ENCODE measurements at regions of chr11 and their contacts with region 1.

Region 1: DNA sequence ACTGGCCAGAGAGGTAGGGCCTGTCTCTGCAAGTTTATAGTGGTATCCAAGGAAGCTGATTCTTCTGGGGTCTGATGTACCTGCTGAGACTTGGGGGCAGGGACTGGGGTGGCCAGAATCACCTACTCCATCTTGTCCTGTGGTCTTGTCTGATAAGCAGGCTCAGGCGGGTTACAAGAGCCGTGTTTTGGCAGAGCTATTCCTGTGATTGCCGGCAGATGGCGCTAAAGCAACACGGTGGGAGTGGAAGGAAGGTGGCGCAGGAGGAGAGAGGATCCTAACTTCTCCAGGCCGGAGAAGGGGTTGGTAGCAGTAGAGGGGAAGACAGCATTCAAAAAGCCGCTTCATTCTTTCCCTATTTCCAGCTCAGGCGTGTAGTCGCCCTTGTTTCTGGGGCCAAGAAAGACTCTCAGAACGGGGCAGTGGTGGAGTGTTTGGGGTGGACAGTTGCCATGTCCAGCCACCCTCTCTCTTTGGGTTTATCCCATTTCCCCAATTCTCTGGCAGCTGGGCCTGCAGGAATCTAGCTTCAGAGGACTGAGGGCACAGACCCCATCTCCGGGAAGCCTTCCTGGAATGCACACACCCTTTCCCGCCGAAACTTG is 15.1 kb downstream of the CHRM1 start:
- DNase-seq: peak; percentile 85
- H3K4me3 ChIP-seq: peak overlapping the region in 1 of 2 experiments; percentile 42; a peak in 2 of 4 replicates
- H3K27ac ChIP-seq: no peak overlapping the region
- H3K4me1 ChIP-seq: peaks cover 0 to 24% of the 10 kb centered on the region in 2 experiments; a peak in 1 of 4 replicates
- H3K27me3 ChIP-seq: no peaks in the 10 kb centered on the region
- CTCF ChIP-seq: peak; percentile 98
- EP300 ChIP-seq: no peak
- RAD21 ChIP-seq: peak; percentile 99

Region 2: GRCh38 chr11:62787005-62787759 is 118.8 kb before region 1 on chr11 and contains the start of gene TMEM179B:
- CTCF ChIA-PET with region 1: no interaction called
- POLR2A ChIA-PET with region 1: no interaction called
- DNase-seq: peak; percentile 97
- H3K4me3 ChIP-seq: peak within 1 kb of the TSS; percentile 76 to 87
- H3K27ac ChIP-seq: peak within 1 kb of the TSS; percentile 65 to 89
- H3K4me1 ChIP-seq: peaks cover 6 to 26% of the 10 kb centered on the region in 2 experiments
- H3K27me3 ChIP-seq: no peaks in the 10 kb centered on the region
- CTCF ChIP-seq: peak; percentile 49
- EP300 ChIP-seq: peak in 1 of 2 experiments; percentile 15; a peak in 1 of 4 replicates
- RAD21 ChIP-seq: peak; percentile 27; the same call in 1 of the 2 replicates
- polyA plus RNA-seq, gene TMEM179B: 69.6 and 73.3 TPM in 2 replicates

Region 3: GRCh38 chr11:62880803-62881578 is 25.0 kb before region 1 on chr11 and contains the start of gene SLC3A2:
- CTCF ChIA-PET with region 1: interaction called, 76 read pairs
- POLR2A ChIA-PET with region 1: no interaction called
- DNase-seq: peak; percentile 89
- H3K4me3 ChIP-seq: peak within 1 kb of the TSS; percentile 82 to 91
- H3K27ac ChIP-seq: peak within 1 kb of the TSS; percentile 94 to 98
- H3K4me1 ChIP-seq: peaks cover 32 to 44% of the 10 kb centered on the region in 2 experiments
- H3K27me3 ChIP-seq: no peaks in the 10 kb centered on the region
- CTCF ChIP-seq: peak; percentile 67
- EP300 ChIP-seq: no peak
- RAD21 ChIP-seq: peak; percentile 57
- polyA plus RNA-seq, gene SLC3A2: 212 and 308 TPM in 2 replicates

Region 4: GRCh38 chr11:62922658-62923431 is 16.8 kb after region 1 on chr11:
- CTCF ChIA-PET with region 1: interaction called, 54 read pairs
- POLR2A ChIA-PET with region 1: no interaction called
- DNase-seq: no peak
- H3K4me3 ChIP-seq: no peak overlapping the region
- H3K27ac ChIP-seq: no peak overlapping the region
- H3K4me1 ChIP-seq: peaks cover 0 to 36% of the 10 kb centered on the region in 2 experiments; a peak in 1 of 4 replicates
- H3K27me3 ChIP-seq: no peaks in the 10 kb centered on the region
- CTCF ChIP-seq: peak; percentile 23; the same call in 1 of the 2 replicates
- EP300 ChIP-seq: no peak
- RAD21 ChIP-seq: no peak

Region 5: DNA sequence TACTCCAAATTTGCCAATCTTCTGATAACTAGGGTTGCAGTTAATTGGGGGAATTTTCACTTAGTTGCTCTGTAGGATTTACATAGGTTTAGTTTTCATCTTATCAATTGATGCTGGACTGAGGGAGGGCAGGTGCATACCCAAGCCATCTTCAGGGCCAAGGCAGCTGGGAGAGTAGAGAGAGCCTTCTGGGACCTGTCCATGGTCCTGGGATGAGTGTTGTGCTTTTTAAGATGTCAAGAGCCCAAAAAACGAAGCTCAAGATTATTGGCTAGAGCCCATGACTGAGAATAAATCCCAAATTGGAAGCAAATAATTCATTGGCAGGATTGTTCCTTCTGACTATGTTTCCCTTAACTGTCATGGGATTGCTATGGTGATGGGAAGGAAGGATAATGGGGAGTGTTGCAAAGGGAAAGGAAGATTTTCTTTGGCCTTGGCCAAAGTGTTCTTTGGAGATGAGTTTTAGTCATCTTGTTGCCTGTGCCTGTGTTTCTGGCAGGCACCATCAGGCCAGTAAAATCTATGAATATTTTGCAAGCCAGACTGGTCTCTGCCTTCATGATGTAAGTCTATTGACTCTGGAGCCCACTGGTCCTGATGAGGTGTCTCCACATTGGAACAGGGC is 74.2 kb after region 1 on chr11:
- CTCF ChIA-PET with region 1: interaction called, 62 read pairs
- POLR2A ChIA-PET with region 1: interaction called, 4 read pairs
- DNase-seq: no peak
- H3K4me3 ChIP-seq: no peak overlapping the region
- H3K27ac ChIP-seq: no peak overlapping the region
- H3K4me1 ChIP-seq: peaks cover 0 to 1% of the 10 kb centered on the region in 2 experiments; a peak in 1 of 4 replicates
- H3K27me3 ChIP-seq: no peaks in the 10 kb centered on the region
- CTCF ChIP-seq: no peak
- EP300 ChIP-seq: no peak
- RAD21 ChIP-seq: no peak

Region 6: DNA sequence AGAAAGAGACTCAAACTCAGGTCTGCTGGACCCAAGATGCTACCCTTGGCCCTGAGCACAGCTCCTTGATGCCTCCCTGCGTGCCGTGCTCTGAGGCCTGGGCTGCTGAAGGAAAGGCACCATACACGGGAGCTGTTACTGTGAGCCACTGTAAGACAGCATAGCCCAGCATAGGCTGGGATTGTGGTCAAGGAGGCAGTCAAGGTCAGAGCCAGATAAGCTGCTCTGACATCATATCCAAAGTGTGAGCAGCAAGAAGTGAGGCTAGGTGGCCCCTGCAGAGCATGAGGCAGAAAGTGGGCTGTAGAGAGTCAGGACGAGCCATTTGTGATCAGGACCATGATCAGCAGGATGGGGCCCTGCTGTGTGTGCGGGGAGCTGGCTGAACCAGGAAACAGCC is 101.9 kb after region 1 on chr11:
- CTCF ChIA-PET with region 1: interaction called, 28 read pairs
- POLR2A ChIA-PET with region 1: no interaction called
- DNase-seq: no peak
- H3K4me3 ChIP-seq: no peak overlapping the region
- H3K27ac ChIP-seq: no peak overlapping the region
- H3K4me1 ChIP-seq: no peaks in the 10 kb centered on the region; a peak in 1 of 4 replicates
- H3K27me3 ChIP-seq: no peaks in the 10 kb centered on the region
- CTCF ChIP-seq: no peak
- EP300 ChIP-seq: no peak
- RAD21 ChIP-seq: no peak

Region 7: GRCh38 chr11:63023841-63024648 is 118.0 kb after region 1 on chr11:
- CTCF ChIA-PET with region 1: interaction called, 751 read pairs
- POLR2A ChIA-PET with region 1: interaction called, 5 read pairs
- DNase-seq: peak; percentile 82
- H3K4me3 ChIP-seq: peak overlapping the region in 1 of 2 experiments; percentile 49; a peak in 1 of 4 replicates
- H3K27ac ChIP-seq: no peak overlapping the region
- H3K4me1 ChIP-seq: peaks cover 0 to 9% of the 10 kb centered on the region in 2 experiments; a peak in 1 of 4 replicates
- H3K27me3 ChIP-seq: no peaks in the 10 kb centered on the region
- CTCF ChIP-seq: peak; percentile 99
- EP300 ChIP-seq: no peak
- RAD21 ChIP-seq: peak; percentile 98

Region 8: DNA sequence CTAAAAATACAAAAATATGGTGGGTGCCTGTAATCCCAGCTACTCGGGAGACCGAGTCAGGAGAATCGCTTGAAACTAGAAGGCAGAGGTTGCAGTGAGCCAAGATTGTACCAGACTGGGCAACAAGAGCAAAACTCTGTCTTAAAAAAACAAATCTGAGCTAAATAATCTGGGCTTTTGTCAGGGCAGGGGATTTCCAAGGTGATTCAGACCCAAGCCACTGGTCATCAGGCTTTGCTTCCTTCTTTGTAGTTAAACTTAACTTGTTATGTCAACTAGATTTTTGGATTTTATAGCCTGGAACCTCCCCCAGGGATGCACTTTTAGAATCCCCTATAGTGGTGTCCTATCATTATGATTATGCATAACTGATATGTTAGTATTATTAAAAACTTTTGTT is 136.6 kb after region 1 on chr11:
- CTCF ChIA-PET with region 1: interaction called, 251 read pairs
- POLR2A ChIA-PET with region 1: no interaction called
- DNase-seq: no peak
- H3K4me3 ChIP-seq: no peak overlapping the region
- H3K27ac ChIP-seq: no peak overlapping the region
- H3K4me1 ChIP-seq: no peaks in the 10 kb centered on the region
- H3K27me3 ChIP-seq: no peaks in the 10 kb centered on the region; the same call in 1 of the 2 replicates
- CTCF ChIP-seq: no peak
- EP300 ChIP-seq: no peak
- RAD21 ChIP-seq: no peak